Right cardiac atrium (tissue), 5 donors: ENCODE measurements at regions of chr9 and their contacts with region 1.

Region 1: GRCh38 chr9:8713149-8713856 is 913.7 kb upstream of the DMAC1 start:
- DNase-seq: peak in 1 of 3 donors; percentile 30
- ATAC-seq: no peak
- H3K4me3 ChIP-seq: no peak overlapping the region
- H3K27ac ChIP-seq: no peak overlapping the region
- H3K4me1 ChIP-seq: no peaks in the 10 kb centered on the region
- H3K27me3 ChIP-seq: no peaks in the 10 kb centered on the region

Region 2: DNA sequence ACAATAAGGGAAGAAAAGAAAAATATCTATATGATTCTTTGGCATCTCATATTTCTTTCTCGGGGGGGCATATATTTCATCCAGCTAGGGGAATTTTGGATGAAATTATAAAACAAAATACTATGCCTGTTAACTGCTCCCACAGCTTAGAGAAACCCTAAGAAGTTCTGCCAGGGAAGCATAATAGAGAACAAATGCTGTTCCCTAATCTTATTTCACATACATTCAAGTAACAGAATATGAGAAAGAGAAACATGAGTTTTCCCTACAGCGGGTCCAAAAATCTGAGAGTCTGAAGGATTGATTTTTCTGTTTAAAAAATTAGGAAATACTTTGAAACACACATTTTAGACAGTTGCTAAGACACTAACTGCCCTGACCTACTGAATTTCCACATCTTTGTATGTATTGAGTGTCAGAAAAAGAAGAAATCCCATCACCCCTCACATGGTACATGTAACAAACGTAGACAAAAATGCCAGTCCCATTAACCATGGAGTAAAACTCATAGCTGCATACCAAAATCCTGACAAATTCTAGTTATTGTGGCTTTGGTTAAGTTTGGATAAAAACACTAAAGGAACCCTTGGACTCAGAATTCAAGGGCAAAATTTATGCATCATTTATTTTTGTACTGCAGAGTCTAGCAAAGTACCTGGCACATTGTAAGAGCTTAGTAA is 293.6 kb before region 1 on chr9:
- intact Hi-C with region 1: no loop called
- DNase-seq: no peak
- ATAC-seq: no peak
- H3K4me3 ChIP-seq: no peak overlapping the region
- H3K27ac ChIP-seq: no peak overlapping the region
- H3K4me1 ChIP-seq: no peaks in the 10 kb centered on the region
- H3K27me3 ChIP-seq: no peaks in the 10 kb centered on the region

Region 3: GRCh38 chr9:8570776-8571175 is 142.5 kb before region 1 on chr9:
- intact Hi-C with region 1: loop called in 1 of 4 experiments (anchors 5 kb)
- DNase-seq: no peak
- ATAC-seq: no peak
- H3K4me3 ChIP-seq: no peak overlapping the region
- H3K27ac ChIP-seq: no peak overlapping the region
- H3K4me1 ChIP-seq: no peaks in the 10 kb centered on the region
- H3K27me3 ChIP-seq: no peaks in the 10 kb centered on the region